OCI-LY7 (cell line): ENCODE measurements at regions of chr13 and their contacts with region 1.

Region 1: DNA sequence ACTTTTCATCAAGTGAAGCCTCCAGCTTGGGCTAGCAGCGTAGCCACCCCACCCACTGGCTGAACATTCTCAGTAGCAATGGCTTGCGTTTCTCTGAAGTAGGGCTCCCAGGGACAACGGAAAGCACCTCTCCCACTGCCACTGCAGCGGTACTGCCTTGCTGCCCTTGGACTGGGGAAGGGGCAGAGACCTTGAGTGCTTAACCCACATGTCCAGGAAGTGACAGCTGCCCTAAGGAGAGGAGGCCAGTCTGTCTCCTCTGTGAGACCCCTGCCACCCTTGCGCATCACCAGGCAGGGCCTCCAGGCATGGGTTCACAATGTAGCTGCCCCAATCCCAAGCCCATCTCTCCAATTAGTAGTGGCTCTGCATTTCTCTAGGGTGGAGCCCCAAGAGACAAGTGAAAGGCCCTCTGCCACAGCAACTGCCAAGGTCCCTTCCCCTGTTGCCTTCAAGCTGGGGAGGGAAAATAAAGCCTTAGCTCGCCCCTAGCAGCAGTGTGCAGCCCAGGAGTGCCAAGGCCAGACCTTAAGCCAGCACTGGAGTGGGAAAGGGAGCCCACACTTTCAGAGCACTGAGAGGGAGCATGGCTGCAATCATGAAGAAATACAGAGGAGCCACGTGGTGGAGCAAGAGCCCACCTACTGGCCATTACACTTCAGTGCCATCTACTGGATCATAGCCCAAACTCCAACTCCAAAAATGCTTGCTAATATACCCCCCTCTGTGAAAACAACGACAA is 175.9 kb upstream of the TRPC4 start:
- DNase-seq: peak; percentile 61
- H3K4me3 ChIP-seq: no peak overlapping the region
- H3K27ac ChIP-seq: no peak overlapping the region
- H3K4me1 ChIP-seq: no peaks in the 10 kb centered on the region
- CTCF ChIP-seq: peak; percentile 84

Region 2: GRCh38 chr13:37656247-37656940 is 389.1 kb before region 1 on chr13:
- CTCF ChIA-PET with region 1: no interaction called
- POLR2A ChIA-PET with region 1: no interaction called
- intact Hi-C with region 1: loop called (anchors 10 kb)
- DNase-seq: no peak
- H3K4me3 ChIP-seq: no peak overlapping the region
- H3K27ac ChIP-seq: no peak overlapping the region
- H3K4me1 ChIP-seq: no peaks in the 10 kb centered on the region
- CTCF ChIP-seq: no peak

Region 3: DNA sequence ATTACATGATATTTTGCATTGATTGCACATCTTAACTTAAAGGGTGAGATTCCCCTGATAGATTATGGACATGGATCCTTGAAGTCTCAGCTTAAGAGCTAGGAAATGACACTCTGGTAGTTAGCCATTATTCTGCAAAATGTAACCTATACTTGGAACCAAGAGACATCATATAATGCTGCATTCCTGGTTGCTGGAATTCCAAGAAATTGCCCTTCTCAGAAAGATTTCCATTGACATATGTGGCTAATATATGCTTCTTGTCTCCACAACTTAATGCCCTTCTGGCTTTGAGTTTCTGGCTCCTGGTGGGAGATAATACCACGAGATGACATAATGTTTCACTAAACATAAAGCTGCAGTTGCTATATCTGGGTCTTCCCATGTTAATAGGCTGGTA is 28.5 kb after region 1 on chr13:
- CTCF ChIA-PET with region 1: no interaction called
- POLR2A ChIA-PET with region 1: no interaction called
- intact Hi-C with region 1: no loop called
- DNase-seq: no peak
- H3K4me3 ChIP-seq: no peak overlapping the region
- H3K27ac ChIP-seq: no peak overlapping the region
- H3K4me1 ChIP-seq: no peaks in the 10 kb centered on the region
- CTCF ChIP-seq: no peak